Activated CD4-positive, alpha-beta T cell treated with anti-CD3 and anti-CD28 coated beads for 36 hours (primary cell): ENCODE measurements at regions of chr7 and their contacts with region 1.

Region 1: GRCh38 chr7:144391823-144392255 is 11.7 kb downstream of the NOBOX start:
- DNase-seq: peak; percentile 19
- ATAC-seq: peak; percentile 78
- H3K4me3 Mint-ChIP-seq: no peak overlapping the region
- H3K27ac Mint-ChIP-seq: no peak overlapping the region
- H3K4me1 Mint-ChIP-seq: peaks cover 4% of the 10 kb centered on the region
- H3K27me3 Mint-ChIP-seq: no peaks in the 10 kb centered on the region

Region 2: DNA sequence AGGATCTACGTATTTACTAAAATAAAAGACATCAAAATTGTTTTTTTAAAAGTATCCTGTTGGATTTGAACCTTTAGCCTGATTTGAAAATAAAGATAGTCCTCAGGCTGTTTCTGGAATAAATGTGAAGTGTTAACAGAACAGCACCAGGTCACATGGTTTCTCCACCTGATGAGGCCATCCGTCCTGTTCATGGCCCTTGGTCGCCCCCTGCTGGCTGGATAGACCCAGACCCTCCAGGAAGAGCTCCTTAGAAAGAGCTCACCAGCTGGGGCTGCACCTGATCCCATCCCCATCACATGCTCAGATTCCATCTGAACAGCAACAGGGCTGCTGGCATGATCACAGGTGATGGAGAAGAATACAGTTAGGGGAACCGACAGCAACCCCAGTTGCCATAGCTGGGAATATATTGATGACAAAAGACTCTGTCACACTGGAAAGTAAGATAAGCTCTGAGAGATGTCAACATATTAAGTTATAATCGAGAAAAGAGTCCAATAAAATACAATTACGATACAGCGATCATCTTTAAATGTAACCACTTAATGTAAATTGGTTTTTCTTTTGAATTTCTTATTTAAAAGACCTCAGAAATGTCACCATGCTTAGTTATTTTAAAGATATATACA is 264.0 kb before region 1 on chr7:
- CTCF ChIA-PET with region 1: interaction called, 4 read pairs
- POLR2A ChIA-PET with region 1: no interaction called
- intact Hi-C with region 1: loop called in 1 of 2 experiments (anchors 1 kb)
- DNase-seq: peak; percentile 96
- ATAC-seq: peak; percentile 100
- H3K4me3 Mint-ChIP-seq: no peak overlapping the region
- H3K27ac Mint-ChIP-seq: no peak overlapping the region
- H3K4me1 Mint-ChIP-seq: no peaks in the 10 kb centered on the region
- H3K27me3 Mint-ChIP-seq: peaks cover 2% of the 10 kb centered on the region

Region 3: DNA sequence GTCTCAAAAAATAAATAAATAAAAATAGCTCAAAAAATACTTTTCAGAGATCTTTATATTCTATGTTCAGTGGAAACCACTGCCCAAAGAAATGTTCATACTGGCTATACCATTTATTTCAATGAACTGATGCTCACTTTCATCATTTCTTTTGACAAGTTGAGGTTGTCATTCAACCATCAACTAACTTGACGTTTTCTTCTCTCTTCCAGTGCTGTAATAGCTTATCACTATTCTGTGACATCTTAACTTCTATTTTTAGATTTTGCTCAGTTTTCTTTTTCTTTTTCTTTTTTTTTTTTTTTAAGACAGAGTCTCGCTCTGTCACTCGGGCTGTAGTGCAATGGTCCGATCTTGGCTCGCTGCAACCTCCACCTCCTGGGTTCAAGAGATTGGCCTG is 217.2 kb before region 1 on chr7:
- CTCF ChIA-PET with region 1: interaction called, 5 read pairs
- POLR2A ChIA-PET with region 1: no interaction called
- intact Hi-C with region 1: loop called (anchors 5 kb)
- DNase-seq: no peak
- ATAC-seq: no peak
- H3K4me3 Mint-ChIP-seq: no peak overlapping the region
- H3K27ac Mint-ChIP-seq: no peak overlapping the region
- H3K4me1 Mint-ChIP-seq: no peaks in the 10 kb centered on the region
- H3K27me3 Mint-ChIP-seq: peaks cover 5% of the 10 kb centered on the region

Region 4: GRCh38 chr7:144437370-144438191 is 45.7 kb after region 1 on chr7:
- CTCF ChIA-PET with region 1: interaction called, 8 read pairs
- POLR2A ChIA-PET with region 1: no interaction called
- intact Hi-C with region 1: loop called in 1 of 2 experiments (anchors 2 kb)
- DNase-seq: peak; percentile 75
- ATAC-seq: peak; percentile 86
- H3K4me3 Mint-ChIP-seq: no peak overlapping the region
- H3K27ac Mint-ChIP-seq: no peak overlapping the region
- H3K4me1 Mint-ChIP-seq: no peaks in the 10 kb centered on the region
- H3K27me3 Mint-ChIP-seq: no peaks in the 10 kb centered on the region